ENCODE measurements at regions of chr4 and their contacts with region 1.

Region 1: GRCh38 chr4:40462326-40462725 is 127.2 kb downstream of the CHRNA9 start:
- DNase-seq: peak; percentile 27
- ATAC-seq: peak; percentile 43
- H3K4me3 Mint-ChIP-seq: no peak overlapping the region
- H3K27ac Mint-ChIP-seq: no peak overlapping the region
- H3K4me1 Mint-ChIP-seq: peaks cover 14% of the 10 kb centered on the region
- H3K27me3 Mint-ChIP-seq: no peaks in the 10 kb centered on the region

Region 2: DNA sequence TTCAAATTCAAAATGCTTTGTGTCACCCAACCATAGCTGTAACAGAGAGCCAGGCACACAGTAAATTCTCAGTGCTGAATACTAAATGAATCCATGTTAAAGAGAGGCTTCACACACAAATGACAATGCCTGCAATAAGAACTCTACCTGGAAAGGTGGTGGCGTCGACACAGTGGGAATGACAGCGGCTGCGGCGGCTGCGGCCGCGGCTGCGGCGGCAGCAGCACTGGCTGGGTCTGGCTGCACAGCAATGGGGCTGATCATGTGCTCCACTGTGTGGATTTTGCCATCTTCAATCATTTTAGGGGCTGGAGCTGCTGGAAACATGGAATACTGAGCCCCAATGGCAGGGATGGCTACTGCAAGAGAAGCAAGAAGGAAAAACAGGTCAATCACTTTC is 29.8 kb before region 1 on chr4:
- CTCF ChIA-PET with region 1: no interaction called
- POLR2A ChIA-PET with region 1: no interaction called
- intact Hi-C with region 1: loop called in 1 of 2 experiments (anchors 2 kb)
- DNase-seq: no peak
- ATAC-seq: no peak
- H3K4me3 Mint-ChIP-seq: no peak overlapping the region
- H3K27ac Mint-ChIP-seq: peak overlapping the region; percentile 51
- H3K4me1 Mint-ChIP-seq: peaks cover 20% of the 10 kb centered on the region
- H3K27me3 Mint-ChIP-seq: no peaks in the 10 kb centered on the region

Region 3: GRCh38 chr4:40550948-40551462 is 88.7 kb after region 1 on chr4:
- CTCF ChIA-PET with region 1: no interaction called
- POLR2A ChIA-PET with region 1: no interaction called
- intact Hi-C with region 1: loop called in 1 of 2 experiments (anchors 10 kb)
- DNase-seq: peak; percentile 20
- ATAC-seq: peak; percentile 48
- H3K4me3 Mint-ChIP-seq: peak overlapping the region; percentile 55
- H3K27ac Mint-ChIP-seq: peak overlapping the region; percentile 52
- H3K4me1 Mint-ChIP-seq: peaks cover 27% of the 10 kb centered on the region
- H3K27me3 Mint-ChIP-seq: no peaks in the 10 kb centered on the region